ENCODE measurements at regions of chr11 and their contacts with region 1.

Region 1: GRCh38 chr11:73716101-73717056 is 44.5 kb downstream of the RAB6A start:
- DNase-seq: peak; percentile 33
- H3K4me3 ChIP-seq: no peak overlapping the region
- H3K27ac ChIP-seq: no peak overlapping the region
- H3K4me1 ChIP-seq: peaks cover 17% of the 10 kb centered on the region
- H3K27me3 ChIP-seq: no peaks in the 10 kb centered on the region
- CTCF ChIP-seq: no peak

Region 2: GRCh38 chr11:73288873-73289707 is 427.3 kb before region 1 on chr11:
- CTCF ChIA-PET with region 1: no interaction called
- POLR2A ChIA-PET with region 1: interaction called, 11 read pairs
- intact Hi-C with region 1: no loop called
- DNase-seq: peak; percentile 88
- H3K4me3 ChIP-seq: no peak overlapping the region
- H3K27ac ChIP-seq: no peak overlapping the region
- H3K4me1 ChIP-seq: peaks cover 4% of the 10 kb centered on the region
- H3K27me3 ChIP-seq: no peaks in the 10 kb centered on the region
- CTCF ChIP-seq: peak; percentile 98

Region 3: DNA sequence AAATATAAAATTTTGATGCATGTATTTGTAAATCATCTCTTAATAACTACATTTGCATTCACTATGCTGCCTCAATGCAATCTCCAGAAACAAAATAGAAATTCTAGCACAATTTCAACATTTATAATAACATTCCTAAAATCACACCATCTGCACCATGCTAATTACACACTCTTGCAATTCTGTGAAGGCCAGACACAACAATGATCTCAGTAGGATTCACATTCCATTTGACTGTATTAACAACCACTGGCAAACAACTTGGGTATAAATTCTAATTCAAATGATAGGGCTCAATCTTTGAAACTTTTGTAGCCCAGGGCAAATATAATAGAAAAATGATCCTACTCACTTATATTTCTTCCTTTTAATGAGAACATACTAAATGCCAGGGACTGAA is 18.6 kb after region 1 on chr11:
- CTCF ChIA-PET with region 1: no interaction called
- POLR2A ChIA-PET with region 1: interaction called, 10 read pairs
- intact Hi-C with region 1: no loop called
- DNase-seq: no peak
- H3K4me3 ChIP-seq: no peak overlapping the region
- H3K27ac ChIP-seq: no peak overlapping the region
- H3K4me1 ChIP-seq: no peaks in the 10 kb centered on the region
- H3K27me3 ChIP-seq: no peaks in the 10 kb centered on the region
- CTCF ChIP-seq: no peak